BJ (cell line): ENCODE measurements at regions of chr10 and their contacts with region 1.

Region 1: GRCh38 chr10:131885391-131886161 is 15.2 kb upstream of the PPP2R2D start:
- DNase-seq: no peak
- H3K4me3 ChIP-seq: no peak overlapping the region
- H3K27me3 ChIP-seq: peaks cover 3% of the 10 kb centered on the region
- CTCF ChIP-seq: peak; percentile 99

Region 2: GRCh38 chr10:131874991-131875451 is 10.6 kb before region 1 on chr10:
- CTCF ChIA-PET with region 1: interaction called, 10 read pairs
- POLR2A ChIA-PET with region 1: no interaction called
- DNase-seq: peak; percentile 6
- H3K4me3 ChIP-seq: no peak overlapping the region
- H3K27me3 ChIP-seq: no peaks in the 10 kb centered on the region; the same call in 1 of the 2 replicates
- CTCF ChIP-seq: peak; percentile 76

Region 3: GRCh38 chr10:131900350-131901146 is 15.0 kb after region 1 on chr10 and contains the start of gene PPP2R2D:
- CTCF ChIA-PET with region 1: interaction called, 22 read pairs
- POLR2A ChIA-PET with region 1: no interaction called
- DNase-seq: peak; percentile 17
- H3K4me3 ChIP-seq: peak within 1 kb of the TSS; percentile 84
- H3K27me3 ChIP-seq: peaks cover 10% of the 10 kb centered on the region
- CTCF ChIP-seq: no peak
- polyA plus RNA-seq, gene PPP2R2D: 27.6 and 31.2 TPM in 2 replicates

Region 4: GRCh38 chr10:132142411-132143161 is 257.0 kb after region 1 on chr10:
- CTCF ChIA-PET with region 1: interaction called, 25 read pairs
- POLR2A ChIA-PET with region 1: no interaction called
- DNase-seq: no peak
- H3K4me3 ChIP-seq: no peak overlapping the region
- H3K27me3 ChIP-seq: no peaks in the 10 kb centered on the region
- CTCF ChIP-seq: peak; percentile 88